G401 (cell line): ENCODE measurements at regions of chr6 and their contacts with region 1.

Region 1: GRCh38 chr6:33668927-33669326 is 42.6 kb downstream of the UQCC2 start:
- DNase-seq: no peak

Region 2: DNA sequence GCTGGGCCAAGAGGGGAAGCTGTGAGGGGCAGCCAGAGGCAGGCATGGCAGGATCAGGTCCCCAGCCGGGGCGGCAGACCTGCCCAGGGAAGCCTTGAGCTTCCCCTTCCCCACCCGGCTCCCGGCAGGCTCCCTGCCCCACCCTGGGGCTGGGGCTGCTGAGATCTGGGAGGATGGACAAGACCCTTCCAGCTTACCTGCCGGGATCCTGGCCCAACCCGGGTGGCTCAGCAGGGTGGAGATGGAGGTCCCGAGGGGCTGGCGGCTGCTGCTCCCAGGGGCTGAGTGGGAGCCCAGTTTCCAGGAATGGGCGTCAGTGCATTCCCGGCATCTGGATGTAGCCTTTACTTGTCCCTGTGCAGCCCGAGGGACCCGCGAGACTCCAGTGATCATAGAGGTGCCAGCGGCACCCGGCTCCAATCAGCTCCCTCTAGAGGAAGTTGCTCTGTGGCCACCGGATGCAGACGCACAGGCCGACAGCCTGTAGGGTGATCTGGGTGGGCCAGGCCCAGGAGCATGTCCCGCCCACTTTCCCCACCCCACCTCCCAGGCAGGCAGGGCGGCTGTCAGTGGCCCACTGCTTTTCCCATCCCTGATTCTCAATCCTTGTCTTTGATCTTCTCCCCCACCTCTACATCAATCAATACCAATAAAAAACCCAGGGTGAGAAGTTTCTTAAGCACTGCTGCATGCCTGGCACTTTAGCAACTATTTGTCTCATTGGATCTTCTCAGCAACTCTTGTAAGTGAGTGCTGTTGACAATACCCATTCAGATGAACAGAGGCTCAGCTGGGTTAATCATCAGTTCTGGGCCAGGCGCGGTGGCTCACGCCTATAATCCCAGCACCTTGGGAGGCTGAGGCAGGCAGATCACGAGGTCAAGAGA is 88.9 kb before region 1 on chr6 and contains the start of gene BAK1:
- in situ Hi-C with region 1: loop called (anchors 10 kb)
- DNase-seq: peak; percentile 95
- total RNA-seq, gene BAK1: 200 and 209 TPM in 2 replicates

Region 3: DNA sequence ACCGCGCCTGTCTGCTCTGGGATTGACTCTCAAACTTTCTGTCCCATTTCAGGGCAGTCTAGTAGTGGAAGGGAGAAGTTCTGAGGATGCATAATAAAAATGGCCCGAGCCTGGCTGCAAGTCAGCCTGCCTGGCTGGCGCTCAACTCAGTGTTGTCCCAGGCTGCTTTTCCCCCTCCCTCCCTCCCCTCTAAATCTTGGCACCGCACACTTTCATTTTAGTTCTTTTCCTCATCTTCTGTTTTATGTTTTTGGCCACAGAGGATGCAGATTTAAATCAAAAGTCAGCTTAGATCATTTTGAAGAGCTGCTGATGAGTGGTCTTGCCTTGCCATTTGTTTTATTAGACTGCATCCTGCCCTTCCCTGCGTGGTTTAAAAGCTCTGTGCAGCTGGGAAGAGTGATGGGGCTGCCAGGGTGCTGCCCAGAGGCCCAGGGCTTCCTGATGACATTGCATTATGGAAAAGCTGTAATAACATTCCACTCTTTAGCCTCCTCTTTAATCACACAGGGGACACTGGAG is 49.1 kb after region 1 on chr6:
- in situ Hi-C with region 1: no loop called
- DNase-seq: no peak